ENCODE measurements at regions of chrX and their contacts with region 1.

Region 1: DNA sequence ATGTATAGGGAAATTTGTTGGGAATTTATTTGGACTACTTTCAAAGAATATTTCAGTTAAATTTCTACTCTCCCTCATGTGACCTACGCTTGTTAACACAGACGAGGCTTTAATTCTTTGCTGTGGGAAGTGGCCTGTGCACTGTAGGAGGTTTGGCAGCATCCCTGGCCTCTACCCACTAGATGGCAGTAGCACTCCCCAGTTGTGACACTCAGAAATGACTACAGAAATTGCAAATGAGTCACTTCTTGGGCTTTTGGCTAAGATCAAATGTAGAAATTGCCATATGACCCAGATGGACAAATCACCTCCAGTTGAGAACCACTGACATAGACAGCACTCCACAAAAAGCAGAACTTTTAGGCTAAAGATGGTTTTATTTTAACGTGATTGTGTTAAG is 22.1 kb downstream of the PIR start:
- DNase-seq: peak; percentile 54
- H3K4me3 ChIP-seq: no peak overlapping the region
- H3K27ac ChIP-seq: no peak overlapping the region; a peak in 2 of 4 replicates
- H3K4me1 ChIP-seq: peaks cover 0 to 8% of the 10 kb centered on the region in 2 experiments; a peak in 2 of 4 replicates
- H3K27me3 ChIP-seq: no peaks in the 10 kb centered on the region
- CTCF ChIP-seq: peak; percentile 95
- EP300 ChIP-seq: no peak
- RAD21 ChIP-seq: peak; percentile 85

Region 2: DNA sequence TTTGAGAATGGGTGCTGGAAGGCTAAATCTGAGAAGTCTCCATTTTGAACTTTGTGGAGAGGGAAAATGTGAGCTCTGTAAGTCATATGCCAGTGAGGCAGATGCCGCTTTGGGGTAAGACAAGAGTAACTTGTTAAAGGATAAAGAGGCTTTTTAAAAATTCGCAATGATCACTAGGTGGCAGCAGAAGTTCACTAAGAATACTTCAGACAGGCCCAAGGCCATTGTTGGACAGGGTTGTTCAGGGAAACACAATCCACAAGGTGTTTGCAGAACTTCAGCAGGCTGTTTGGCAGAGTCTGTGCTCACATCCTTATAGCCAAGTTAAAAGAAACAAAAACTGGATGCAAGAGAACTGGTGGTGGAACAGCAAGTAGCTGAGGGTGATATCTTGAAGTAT is 122.0 kb before region 1 on chrX:
- CTCF ChIA-PET with region 1: interaction called, 108 read pairs
- POLR2A ChIA-PET with region 1: interaction called, 3 read pairs
- DNase-seq: peak; percentile 62
- H3K4me3 ChIP-seq: no peak overlapping the region
- H3K27ac ChIP-seq: peak overlapping the region in 1 of 2 experiments; percentile 93; a peak in 2 of 4 replicates
- H3K4me1 ChIP-seq: peaks cover 0 to 7% of the 10 kb centered on the region in 2 experiments; a peak in 2 of 4 replicates
- H3K27me3 ChIP-seq: peaks cover 4% of the 10 kb centered on the region; the same call in 1 of the 2 replicates
- CTCF ChIP-seq: peak; percentile 75
- EP300 ChIP-seq: no peak
- RAD21 ChIP-seq: peak; percentile 91

Region 3: GRCh38 chrX:15384304-15384703 is 86.7 kb before region 1 on chrX and contains the start of gene VEGFD:
- CTCF ChIA-PET with region 1: interaction called, 24 read pairs
- POLR2A ChIA-PET with region 1: no interaction called
- DNase-seq: no peak
- H3K4me3 ChIP-seq: peak within 1 kb of the TSS in 1 of 2 experiments; percentile 28; a peak in 1 of 4 replicates
- H3K27ac ChIP-seq: peak within 1 kb of the TSS in 1 of 2 experiments; percentile 53; a peak in 2 of 4 replicates
- H3K4me1 ChIP-seq: no peaks in the 10 kb centered on the region; a peak in 1 of 4 replicates
- H3K27me3 ChIP-seq: no peaks in the 10 kb centered on the region
- CTCF ChIP-seq: no peak
- EP300 ChIP-seq: no peak
- RAD21 ChIP-seq: no peak
- polyA plus RNA-seq, gene VEGFD: 5.3 and 6.3 TPM in 2 replicates

Region 4: DNA sequence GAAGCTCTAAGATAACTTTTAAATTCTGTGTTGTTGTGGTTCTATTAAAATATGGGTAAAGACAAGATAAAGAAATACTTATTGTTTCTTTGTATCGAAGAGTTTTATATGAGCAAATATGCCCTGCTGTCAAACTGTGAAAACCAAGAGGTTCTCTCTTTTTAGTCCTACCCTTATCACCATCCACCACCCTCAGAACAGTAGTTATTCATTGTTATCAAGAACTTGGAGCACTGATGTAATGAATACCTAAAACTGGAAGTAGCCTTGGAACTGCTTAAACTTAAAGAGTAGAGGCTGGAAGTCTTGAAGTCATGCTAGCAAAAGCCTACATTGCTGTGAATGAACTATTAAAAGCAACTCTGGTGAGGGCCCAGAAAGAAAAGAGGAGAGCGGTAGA is 12.9 kb after region 1 on chrX:
- CTCF ChIA-PET with region 1: interaction called, 15 read pairs
- POLR2A ChIA-PET with region 1: no interaction called
- DNase-seq: no peak
- H3K4me3 ChIP-seq: no peak overlapping the region
- H3K27ac ChIP-seq: no peak overlapping the region
- H3K4me1 ChIP-seq: no peaks in the 10 kb centered on the region
- H3K27me3 ChIP-seq: no peaks in the 10 kb centered on the region
- CTCF ChIP-seq: no peak
- EP300 ChIP-seq: no peak
- RAD21 ChIP-seq: no peak

Region 5: GRCh38 chrX:15564981-15565579 is 94.1 kb after region 1 on chrX:
- CTCF ChIA-PET with region 1: interaction called, 20 read pairs
- POLR2A ChIA-PET with region 1: no interaction called
- DNase-seq: peak; percentile 27
- H3K4me3 ChIP-seq: no peak overlapping the region
- H3K27ac ChIP-seq: no peak overlapping the region; a peak in 1 of 4 replicates
- H3K4me1 ChIP-seq: peaks cover 0 to 5% of the 10 kb centered on the region in 2 experiments; a peak in 2 of 4 replicates
- H3K27me3 ChIP-seq: peaks cover 7% of the 10 kb centered on the region; the same call in 1 of the 2 replicates
- CTCF ChIP-seq: peak; percentile 69
- EP300 ChIP-seq: no peak
- RAD21 ChIP-seq: peak; percentile 83

Region 6: DNA sequence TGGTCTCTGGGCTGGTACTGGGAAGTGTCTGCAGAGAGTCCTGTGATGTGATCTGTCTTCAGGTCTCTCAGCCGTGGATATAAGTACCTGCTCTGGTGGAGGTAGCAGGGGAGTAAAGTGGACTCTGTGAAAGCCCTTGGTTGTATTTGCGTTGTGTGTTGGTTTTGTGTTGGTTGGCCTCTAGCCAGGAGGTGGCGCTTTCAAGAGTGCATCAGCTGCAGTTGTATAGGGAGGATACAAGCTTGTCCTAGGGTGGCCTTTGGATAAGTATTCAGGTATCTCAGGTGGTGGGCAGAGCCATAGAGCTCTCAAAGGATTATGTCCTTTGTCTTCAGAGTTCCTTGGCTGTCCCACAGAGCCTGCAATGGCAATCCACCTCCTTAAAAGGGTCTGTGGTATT is 807.9 kb after region 1 on chrX:
- CTCF ChIA-PET with region 1: no interaction called
- POLR2A ChIA-PET with region 1: no interaction called
- DNase-seq: no peak
- H3K4me3 ChIP-seq: no peak overlapping the region
- H3K27ac ChIP-seq: no peak overlapping the region
- H3K4me1 ChIP-seq: no peaks in the 10 kb centered on the region; a peak in 1 of 4 replicates
- H3K27me3 ChIP-seq: no peaks in the 10 kb centered on the region
- CTCF ChIP-seq: peak; percentile 22; the same call in 1 of the 2 replicates
- EP300 ChIP-seq: no peak
- RAD21 ChIP-seq: no peak